ENCODE measurements at regions of chr10 and their contacts with region 1.

Region 1: DNA sequence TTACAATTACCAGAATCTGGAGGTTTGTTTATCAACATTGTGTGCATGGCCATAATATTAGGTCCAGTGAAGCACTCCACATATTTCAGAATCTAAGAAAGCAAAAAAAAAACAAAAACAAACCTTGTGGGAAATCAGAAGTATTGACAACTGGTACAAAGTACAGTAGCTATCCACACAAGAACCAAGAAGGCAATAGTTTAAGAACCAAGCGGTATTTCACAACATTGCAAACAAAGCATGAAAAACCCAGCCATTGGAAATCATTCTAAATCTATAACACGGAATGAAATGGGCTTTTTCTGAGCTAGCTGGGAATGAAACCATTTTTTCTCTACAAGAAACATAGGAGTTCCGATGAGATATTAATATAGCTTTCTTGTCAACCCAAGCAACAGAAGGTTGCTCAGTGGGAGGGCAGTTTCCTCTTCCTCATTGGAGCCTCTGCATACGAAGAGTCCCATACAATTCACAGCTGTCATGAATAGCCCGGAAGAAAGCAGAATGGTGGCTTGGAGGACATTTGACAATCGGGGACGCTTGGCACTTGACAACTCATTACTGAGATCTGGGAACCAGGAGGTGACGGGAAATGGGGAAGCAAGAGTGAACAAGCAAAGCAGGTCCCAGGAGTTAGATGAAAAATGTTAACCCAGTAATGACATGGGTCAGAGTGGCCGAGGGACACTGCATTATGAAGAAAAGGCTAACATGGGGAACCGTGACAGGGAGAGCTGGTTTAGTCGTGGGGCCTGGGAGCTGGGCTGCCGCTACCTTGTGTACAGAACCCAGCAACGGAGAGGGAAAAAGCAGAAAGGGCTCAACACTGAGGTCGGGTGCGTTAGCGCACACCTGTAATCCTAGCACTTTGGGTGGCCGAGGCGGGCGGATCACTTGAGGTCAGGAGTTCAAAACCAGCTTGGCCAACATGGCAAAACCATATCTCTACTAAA is 7.8 kb downstream of the PHYH start:
- DNase-seq: no peak
- H3K4me3 ChIP-seq: no peak overlapping the region
- H3K27ac ChIP-seq: no peak overlapping the region
- H3K4me1 ChIP-seq: no peaks in the 10 kb centered on the region
- H3K27me3 ChIP-seq: no peaks in the 10 kb centered on the region
- CTCF ChIP-seq: no peak
- EP300 ChIP-seq: no peak
- POLR2A ChIP-seq: no peak

Region 2: GRCh38 chr10:12902135-12902572 is 389.9 kb before region 1 on chr10:
- intact Hi-C with region 1: no loop called
- DNase-seq: peak; percentile 57 to 87
- H3K4me3 ChIP-seq: no peak overlapping the region
- H3K27ac ChIP-seq: no peak overlapping the region
- H3K4me1 ChIP-seq: peaks cover 0 to 3% (median 0%) of the 10 kb centered on the region in 4 donors
- H3K27me3 ChIP-seq: peaks cover 0 to 6% (median 0%) of the 10 kb centered on the region in 3 donors
- CTCF ChIP-seq: peak in 5 of 7 experiments; percentile 55 to 78 (median 68)
- EP300 ChIP-seq: no peak
- POLR2A ChIP-seq: no peak

Region 3: GRCh38 chr10:13099666-13100348 is 192.3 kb before region 1 on chr10 and contains the start of gene OPTN:
- intact Hi-C with region 1: loop called (anchors 5 kb)
- DNase-seq: peak; percentile 74 to 94
- H3K4me3 ChIP-seq: peak within 1 kb of the TSS; percentile 73 to 99 (median 95)
- H3K27ac ChIP-seq: peak within 1 kb of the TSS; percentile 90 to 97 (median 95)
- H3K4me1 ChIP-seq: peaks cover 21 to 37% (median 30%) of the 10 kb centered on the region in 4 donors
- H3K27me3 ChIP-seq: no peaks in the 10 kb centered on the region
- CTCF ChIP-seq: peak in 5 of 7 experiments; percentile 38 to 65 (median 41)
- EP300 ChIP-seq: no peak
- POLR2A ChIP-seq: peak in 1 of 4 donors; percentile 36
- total RNA-seq, gene OPTN: 32.6 to 68.3 (median 43.4) TPM

Region 4: DNA sequence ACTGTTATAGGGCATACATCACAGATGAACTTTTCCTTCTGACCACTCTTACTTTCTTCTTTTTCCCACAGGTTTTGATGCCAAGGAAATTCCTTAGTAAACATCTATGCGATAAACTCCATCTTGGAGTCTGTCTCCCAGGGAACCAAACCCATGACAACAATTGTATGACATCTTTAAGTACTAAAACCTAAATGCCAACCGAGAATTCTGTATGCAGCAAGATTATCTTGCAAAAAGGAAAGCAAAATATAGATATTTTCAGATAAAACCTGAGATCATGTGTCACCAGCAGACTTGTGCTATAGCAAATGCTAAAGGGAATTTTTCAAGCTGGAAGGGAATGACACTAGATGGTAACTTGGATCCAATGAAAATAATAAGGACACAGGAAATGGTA is 258.7 kb after region 1 on chr10:
- intact Hi-C with region 1: no loop called
- DNase-seq: no peak
- H3K4me3 ChIP-seq: no peak overlapping the region
- H3K27ac ChIP-seq: no peak overlapping the region
- H3K4me1 ChIP-seq: no peaks in the 10 kb centered on the region
- H3K27me3 ChIP-seq: peaks cover 0 to 6% (median 0%) of the 10 kb centered on the region in 3 donors
- CTCF ChIP-seq: no peak
- EP300 ChIP-seq: no peak
- POLR2A ChIP-seq: no peak